Lower leg skin (tissue), 4 donors: ENCODE measurements at regions of chr11 and their contacts with region 1.

Region 1: GRCh38 chr11:113106507-113106906 is 145.3 kb downstream of the NCAM1 start:
- DNase-seq: no peak
- H3K4me3 ChIP-seq: no peak overlapping the region
- CTCF ChIP-seq: no peak
- POLR2A ChIP-seq: no peak

Region 2: GRCh38 chr11:111911563-111912401 is 1194.7 kb before region 1 on chr11 and contains the start of gene CRYAB:
- intact Hi-C with region 1: loop called (anchors 5 kb)
- DNase-seq: peak; percentile 94 to 97
- H3K4me3 ChIP-seq: peak within 1 kb of the TSS; percentile 38
- CTCF ChIP-seq: no peak
- POLR2A ChIP-seq: no peak
- total RNA-seq, gene CRYAB: 130 to 209 (median 200) TPM

Region 3: DNA sequence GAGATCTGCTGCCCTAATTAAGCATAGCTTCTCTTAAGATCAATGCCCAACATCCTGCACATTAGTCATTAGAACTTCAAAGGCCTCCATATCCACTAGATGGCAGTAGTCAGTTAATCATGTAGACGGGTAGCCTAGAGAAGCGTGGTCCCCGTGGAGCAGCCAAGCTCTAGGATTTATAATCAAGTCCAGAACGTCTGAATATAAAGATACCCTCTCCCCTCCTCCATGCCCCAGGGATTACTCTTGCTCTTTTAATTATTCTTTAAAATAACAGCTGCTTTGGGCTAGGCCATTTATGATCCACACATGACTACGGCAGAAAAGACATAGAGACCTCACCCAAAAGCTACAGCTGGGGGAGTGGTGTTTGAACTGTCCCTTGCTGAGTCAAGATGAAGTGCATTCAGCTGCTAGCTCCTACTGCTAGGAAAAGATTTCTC is 518.2 kb before region 1 on chr11:
- intact Hi-C with region 1: loop called (anchors 10 kb)
- DNase-seq: peak in 1 of 2 donors; percentile 52
- H3K4me3 ChIP-seq: no peak overlapping the region
- CTCF ChIP-seq: no peak
- POLR2A ChIP-seq: no peak

Region 4: GRCh38 chr11:113091481-113091780 is 15.1 kb before region 1 on chr11:
- intact Hi-C with region 1: no loop called
- DNase-seq: no peak
- H3K4me3 ChIP-seq: no peak overlapping the region
- CTCF ChIP-seq: no peak
- POLR2A ChIP-seq: no peak